Lower lobe of right lung (tissue), 2 donors: ENCODE measurements at regions of chr3 and their contacts with region 1.

Region 1: DNA sequence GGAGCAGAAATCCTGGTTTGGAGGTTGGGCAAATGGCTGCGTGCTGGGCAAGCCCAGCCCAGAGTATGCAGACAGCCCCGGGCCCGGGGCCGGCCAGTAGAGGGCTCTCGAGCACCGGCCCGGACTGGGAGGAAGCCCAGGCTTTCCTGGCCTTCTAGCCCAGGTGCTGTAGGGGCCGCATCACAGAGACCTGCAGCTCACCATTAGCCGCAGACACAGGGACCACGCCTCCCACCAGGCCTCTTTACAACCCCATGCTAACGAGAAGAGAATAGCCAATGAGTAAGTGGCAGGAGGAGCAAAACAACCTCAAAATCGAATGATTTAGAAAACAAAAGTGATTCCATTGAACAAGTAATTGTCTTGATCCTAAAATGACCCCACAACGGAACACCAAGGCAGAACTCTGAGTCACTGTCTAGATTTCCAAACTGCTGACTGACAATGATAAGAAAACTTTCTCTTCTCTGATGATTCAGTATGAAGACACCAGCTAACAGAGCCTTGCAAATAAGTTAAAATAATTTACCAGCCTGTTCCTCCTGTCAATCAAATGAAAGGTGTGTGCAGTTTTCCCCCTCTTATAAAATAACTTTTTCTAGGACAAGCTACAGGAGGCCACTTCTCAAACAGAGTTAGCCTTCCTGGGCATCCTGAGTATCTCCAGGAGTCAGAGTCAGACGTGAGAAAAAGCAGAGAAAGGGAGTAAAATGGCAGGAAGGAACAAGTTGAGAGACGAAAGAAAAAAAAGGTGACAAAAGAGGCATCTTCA is 102.2 kb downstream of the DGKG start:
- DNase-seq: peak; percentile 82
- ATAC-seq: peak; percentile 92 to 95
- H3K4me3 ChIP-seq: no peak overlapping the region
- H3K27ac ChIP-seq: no peak overlapping the region
- H3K4me1 ChIP-seq: peaks cover 10% of the 10 kb centered on the region
- H3K27me3 ChIP-seq: no peaks in the 10 kb centered on the region
- CTCF ChIP-seq: peak; percentile 81

Region 2: GRCh38 chr3:186208296-186208989 is 51.4 kb before region 1 on chr3:
- intact Hi-C with region 1: no loop called
- DNase-seq: no peak
- ATAC-seq: no peak
- H3K4me3 ChIP-seq: no peak overlapping the region
- H3K27ac ChIP-seq: no peak overlapping the region
- H3K4me1 ChIP-seq: peaks cover 27% of the 10 kb centered on the region
- H3K27me3 ChIP-seq: no peaks in the 10 kb centered on the region
- CTCF ChIP-seq: no peak

Region 3: DNA sequence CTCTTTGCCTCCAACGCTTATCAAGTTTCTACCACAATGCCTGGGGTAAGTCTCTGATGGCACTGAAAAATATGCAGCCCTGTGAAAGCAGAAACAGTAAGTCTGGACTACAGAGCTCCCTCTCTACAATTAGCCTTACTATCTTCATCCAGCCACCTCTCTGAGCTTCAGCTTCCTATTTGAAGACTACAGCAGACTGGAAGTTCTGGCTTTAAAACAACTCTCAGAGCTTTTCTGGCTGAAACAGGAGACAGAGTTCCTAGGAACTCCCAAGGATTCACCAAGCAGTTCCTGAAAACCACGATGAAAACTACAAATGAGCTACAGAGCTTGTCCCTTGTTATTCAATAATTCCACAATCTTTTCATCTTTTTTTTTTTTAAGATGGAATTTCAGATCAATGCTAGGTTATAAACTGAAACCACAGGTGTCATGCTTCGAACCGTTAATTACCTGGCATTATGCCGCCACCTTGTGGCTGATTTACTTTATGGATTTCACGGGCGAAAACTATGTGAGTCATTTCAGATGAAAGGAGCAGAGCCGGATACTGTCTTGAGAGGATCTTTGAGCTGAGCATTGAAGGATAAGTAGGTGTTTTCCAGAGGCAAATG is 280.5 kb after region 1 on chr3:
- intact Hi-C with region 1: loop called (anchors 10 kb)
- DNase-seq: no peak
- ATAC-seq: peak; percentile 83 to 92
- H3K4me3 ChIP-seq: peak overlapping the region; percentile 23
- H3K27ac ChIP-seq: no peak overlapping the region
- H3K4me1 ChIP-seq: no peaks in the 10 kb centered on the region
- H3K27me3 ChIP-seq: no peaks in the 10 kb centered on the region
- CTCF ChIP-seq: peak; percentile 70